ENCODE measurements at regions of chr11 and their contacts with region 1.

Region 1: DNA sequence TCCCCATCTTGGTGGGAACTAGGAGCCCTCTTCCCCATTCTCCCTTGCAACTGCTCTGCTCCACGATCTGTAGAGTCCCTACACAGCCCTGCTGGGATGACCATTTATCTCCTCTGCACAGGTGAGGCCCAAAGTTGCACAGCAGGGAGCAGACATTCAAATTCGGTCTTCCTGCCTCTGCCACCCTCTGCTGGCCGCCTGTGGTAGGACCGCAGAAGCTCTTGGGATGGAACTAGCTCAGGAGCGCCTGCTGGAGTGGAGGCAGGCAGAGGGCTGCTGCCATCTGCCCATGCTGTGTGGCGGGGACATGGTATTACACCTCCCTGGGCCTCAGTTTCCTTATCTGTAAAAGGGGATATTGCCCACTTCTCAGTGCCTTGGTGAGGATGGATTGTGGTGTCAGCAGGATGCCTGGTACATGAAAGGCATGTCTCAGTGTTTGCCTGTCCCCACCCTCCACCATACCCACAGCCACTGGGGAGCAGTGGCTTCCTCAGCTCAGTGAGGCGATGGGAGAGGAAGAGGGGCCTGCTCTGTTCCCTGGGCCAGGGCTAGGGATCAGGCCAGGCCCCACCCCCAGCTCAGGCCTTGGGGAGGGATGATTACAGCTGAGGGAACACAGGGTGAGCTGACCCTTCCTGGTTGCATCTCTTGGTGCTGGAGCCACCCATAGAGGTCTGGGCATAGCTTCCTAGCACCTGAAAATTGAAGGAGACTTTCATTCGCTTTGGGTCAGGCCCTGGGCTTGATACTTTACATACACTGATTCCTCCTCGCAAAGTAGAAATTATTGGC is 11.3 kb upstream of the OMP start:
- DNase-seq: peak; percentile 88
- ATAC-seq: peak; percentile 95
- H3K4me3 Mint-ChIP-seq: no peak overlapping the region
- H3K27ac Mint-ChIP-seq: no peak overlapping the region
- H3K4me1 Mint-ChIP-seq: peaks cover 6% of the 10 kb centered on the region
- H3K27me3 Mint-ChIP-seq: no peaks in the 10 kb centered on the region

Region 2: DNA sequence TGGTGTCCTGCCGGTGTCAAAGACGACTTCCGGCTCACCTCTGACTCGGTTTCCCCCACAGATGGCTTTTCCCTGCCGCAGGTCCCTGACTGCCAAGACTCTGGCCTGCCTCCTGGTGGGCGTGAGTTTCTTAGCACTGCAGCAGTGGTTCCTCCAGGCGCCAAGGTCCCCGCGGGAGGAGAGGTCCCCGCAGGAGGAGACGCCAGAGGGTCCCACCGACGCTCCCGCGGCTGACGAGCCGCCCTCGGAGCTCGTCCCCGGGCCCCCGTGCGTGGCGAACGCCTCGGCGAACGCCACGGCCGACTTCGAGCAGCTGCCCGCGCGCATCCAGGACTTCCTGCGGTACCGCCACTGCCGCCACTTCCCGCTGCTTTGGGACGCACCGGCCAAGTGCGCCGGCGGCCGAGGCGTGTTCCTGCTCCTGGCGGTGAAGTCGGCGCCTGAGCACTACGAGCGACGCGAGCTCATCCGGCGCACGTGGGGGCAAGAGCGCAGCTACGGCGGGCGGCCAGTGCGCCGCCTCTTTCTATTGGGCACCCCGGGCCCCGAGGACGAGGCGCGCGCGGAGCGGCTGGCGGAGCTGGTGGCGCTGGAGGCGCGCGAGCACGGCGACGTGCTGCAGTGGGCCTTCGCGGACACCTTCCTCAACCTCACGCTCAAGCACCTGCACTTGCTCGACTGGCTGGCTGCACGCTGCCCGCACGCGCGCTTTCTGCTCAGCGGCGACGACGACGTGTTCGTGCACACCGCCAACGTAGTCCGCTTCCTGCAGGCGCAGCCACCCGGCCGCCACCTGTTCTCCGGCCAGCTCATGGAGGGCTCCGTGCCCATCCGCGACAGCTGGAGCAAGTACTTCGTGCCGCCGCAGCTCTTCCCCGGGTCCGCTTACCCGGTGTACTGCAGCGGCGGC is 51.6 kb before region 1 on chr11:
- CTCF ChIA-PET with region 1: interaction called, 30 read pairs
- DNase-seq: peak; percentile 45
- ATAC-seq: peak; percentile 60
- H3K4me3 Mint-ChIP-seq: no peak overlapping the region
- H3K27ac Mint-ChIP-seq: no peak overlapping the region
- H3K4me1 Mint-ChIP-seq: peaks cover 4% of the 10 kb centered on the region
- H3K27me3 Mint-ChIP-seq: peaks cover 59% of the 10 kb centered on the region

Region 3: GRCh38 chr11:77053217-77054015 is 37.9 kb before region 1 on chr11:
- CTCF ChIA-PET with region 1: interaction called, 118 read pairs
- DNase-seq: no peak
- ATAC-seq: no peak
- H3K4me3 Mint-ChIP-seq: no peak overlapping the region
- H3K27ac Mint-ChIP-seq: no peak overlapping the region
- H3K4me1 Mint-ChIP-seq: no peaks in the 10 kb centered on the region
- H3K27me3 Mint-ChIP-seq: no peaks in the 10 kb centered on the region

Region 4: GRCh38 chr11:77073328-77074001 is 17.9 kb before region 1 on chr11:
- CTCF ChIA-PET with region 1: interaction called, 12 read pairs
- DNase-seq: no peak
- ATAC-seq: peak; percentile 72
- H3K4me3 Mint-ChIP-seq: no peak overlapping the region
- H3K27ac Mint-ChIP-seq: no peak overlapping the region
- H3K4me1 Mint-ChIP-seq: peaks cover 24% of the 10 kb centered on the region
- H3K27me3 Mint-ChIP-seq: peaks cover 30% of the 10 kb centered on the region

Region 5: DNA sequence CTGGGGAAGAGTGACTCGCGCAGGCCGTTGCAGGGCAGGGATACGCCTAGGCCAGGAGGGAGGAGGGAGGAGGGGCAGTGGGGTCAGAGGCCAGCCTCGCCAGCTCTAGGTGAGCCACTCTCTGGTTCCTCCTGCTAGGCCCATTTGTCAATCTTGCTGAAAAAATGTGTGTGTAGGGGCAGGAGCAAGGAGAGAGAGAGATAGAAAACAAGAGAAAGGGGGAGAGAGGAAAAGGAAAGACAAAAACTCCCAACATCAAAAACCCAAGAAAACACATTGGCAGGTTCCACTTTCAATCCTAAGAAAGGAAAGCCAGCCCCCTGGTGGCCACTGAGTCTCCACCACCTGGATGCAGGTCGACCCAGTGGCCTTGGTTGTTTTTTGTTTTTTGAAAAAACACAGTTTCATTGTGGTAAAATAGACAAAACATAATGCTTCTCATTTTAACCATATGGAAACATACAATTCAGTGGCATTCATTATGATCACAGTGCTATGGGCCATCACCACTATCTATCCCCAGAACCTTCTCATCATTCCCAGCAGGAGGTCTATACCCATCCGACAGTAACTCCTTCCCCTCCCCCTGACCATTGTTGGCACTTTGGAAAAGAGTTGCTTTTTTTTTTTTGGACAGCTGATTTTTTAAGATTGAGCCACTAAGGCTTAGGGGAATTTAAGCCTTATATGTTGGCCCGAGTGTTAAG is 22.2 kb after region 1 on chr11:
- CTCF ChIA-PET with region 1: interaction called, 12 read pairs
- DNase-seq: no peak
- ATAC-seq: no peak
- H3K4me3 Mint-ChIP-seq: no peak overlapping the region
- H3K27ac Mint-ChIP-seq: no peak overlapping the region
- H3K4me1 Mint-ChIP-seq: peaks cover 2% of the 10 kb centered on the region
- H3K27me3 Mint-ChIP-seq: no peaks in the 10 kb centered on the region

Measured in activated CD8-positive, alpha-beta memory T cell treated with anti-CD3 and anti-CD28 coated beads, Interleukin-2, amount 10 ng/mL, durations not matched to agents 7 days and 5 days (primary cell).